Ovary (tissue), 10 donors: ENCODE measurements at regions of chr6 and their contacts with region 1.

Region 1: GRCh38 chr6:156634951-156635371 is 142.2 kb upstream of the ARID1B start:
- DNase-seq: peak in 2 of 5 donors; percentile 22 to 54
- H3K4me3 ChIP-seq: peak overlapping the region; percentile 33
- H3K27ac ChIP-seq: peak overlapping the region in 1 of 2 donors; percentile 35
- H3K4me1 ChIP-seq: no peaks in the 10 kb centered on the region
- H3K27me3 ChIP-seq: no peaks in the 10 kb centered on the region
- CTCF ChIP-seq: no peak
- EP300 ChIP-seq: no peak
- POLR2A ChIP-seq: no peak

Region 2: GRCh38 chr6:154857529-154857928 is 1777.4 kb before region 1 on chr6:
- intact Hi-C with region 1: loop called in 1 of 4 experiments (anchors 5 kb)
- DNase-seq: no peak
- H3K4me3 ChIP-seq: no peak overlapping the region
- H3K27ac ChIP-seq: no peak overlapping the region
- H3K4me1 ChIP-seq: no peaks in the 10 kb centered on the region
- H3K27me3 ChIP-seq: no peaks in the 10 kb centered on the region
- CTCF ChIP-seq: no peak
- EP300 ChIP-seq: no peak
- POLR2A ChIP-seq: no peak

Region 3: DNA sequence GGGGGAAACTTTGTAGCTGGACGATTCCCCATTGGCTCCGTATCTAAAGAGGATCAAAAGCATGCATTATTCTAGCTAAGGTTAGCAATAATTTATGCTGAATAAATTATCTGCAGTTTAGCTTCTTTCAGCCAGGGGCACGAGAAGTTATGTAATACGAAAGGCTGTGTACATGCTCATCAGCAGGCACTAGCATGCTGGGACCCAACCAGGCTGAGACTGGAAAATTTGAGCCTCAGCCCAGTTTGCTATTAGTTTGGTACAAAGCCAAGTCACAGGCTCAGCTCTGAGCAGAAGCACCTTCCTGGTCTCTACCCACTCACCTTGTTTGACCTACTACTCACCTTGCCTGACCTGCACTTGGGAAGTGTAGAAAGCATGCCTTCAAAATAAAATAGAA is 185.8 kb before region 1 on chr6:
- intact Hi-C with region 1: no loop called
- DNase-seq: no peak
- H3K4me3 ChIP-seq: no peak overlapping the region
- H3K27ac ChIP-seq: no peak overlapping the region
- H3K4me1 ChIP-seq: no peaks in the 10 kb centered on the region
- H3K27me3 ChIP-seq: no peaks in the 10 kb centered on the region
- CTCF ChIP-seq: no peak
- EP300 ChIP-seq: no peak
- POLR2A ChIP-seq: no peak